ENCODE measurements at regions of chr21 and their contacts with region 1.

Region 1: GRCh38 chr21:25607151-25608043 is at the start of gene MRPL39:
- DNase-seq: peak; percentile 78
- H3K4me3 ChIP-seq: peak within 1 kb of the TSS; percentile 60 to 97 (median 97)
- H3K27ac ChIP-seq: peak within 1 kb of the TSS; percentile 68
- H3K4me1 ChIP-seq: peaks cover 10% of the 10 kb centered on the region
- H3K27me3 ChIP-seq: no peaks in the 10 kb centered on the region
- CTCF ChIP-seq: peak; percentile 55 to 68
- POLR2A ChIP-seq: peak; percentile 73
- total RNA-seq, gene MRPL39: 25.2 and 28.1 TPM in 2 replicates

Region 2: DNA sequence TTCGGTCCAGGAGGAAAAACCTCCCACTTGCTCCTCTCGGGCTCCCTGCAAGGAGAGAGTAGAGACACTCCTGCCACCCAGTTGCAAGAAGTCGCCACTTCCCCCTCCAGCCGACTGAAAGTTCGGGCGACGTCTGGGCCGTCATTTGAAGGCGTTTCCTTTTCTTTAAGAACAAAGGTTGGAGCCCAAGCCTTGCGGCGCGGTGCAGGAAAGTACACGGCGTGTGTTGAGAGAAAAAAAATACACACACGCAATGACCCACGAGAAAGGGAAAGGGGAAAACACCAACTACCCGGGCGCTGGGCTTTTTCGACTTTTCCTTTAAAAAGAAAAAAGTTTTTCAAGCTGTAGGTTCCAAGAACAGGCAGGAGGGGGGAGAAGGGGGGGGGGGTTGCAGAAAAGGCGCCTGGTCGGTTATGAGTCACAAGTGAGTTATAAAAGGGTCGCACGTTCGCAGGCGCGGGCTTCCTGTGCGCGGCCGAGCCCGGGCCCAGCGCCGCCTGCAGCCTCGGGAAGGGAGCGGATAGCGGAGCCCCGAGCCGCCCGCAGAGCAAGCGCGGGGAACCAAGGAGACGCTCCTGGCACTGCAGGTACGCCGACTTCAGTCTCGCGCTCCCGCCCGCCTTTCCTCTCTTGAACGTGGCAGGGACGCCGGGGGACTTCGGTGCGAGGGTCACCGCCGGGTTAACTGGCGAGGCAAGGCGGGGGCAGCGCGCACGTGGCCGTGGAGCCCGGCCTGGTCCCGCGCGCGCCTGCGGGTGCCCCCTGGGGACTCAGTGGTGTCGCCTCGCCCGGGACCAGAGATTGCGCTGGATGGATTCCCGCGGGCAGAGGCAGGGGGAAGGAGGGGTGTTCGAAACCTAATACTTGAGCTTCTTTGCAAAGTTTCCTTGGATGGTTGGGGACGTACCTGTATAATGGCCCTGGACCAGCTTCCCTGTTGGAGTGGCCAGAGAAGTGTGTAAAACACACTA is 45.4 kb before region 1 on chr21:
- CTCF ChIA-PET with region 1: interaction called, 3 read pairs
- POLR2A ChIA-PET with region 1: no interaction called
- dilution Hi-C with region 1: no loop called
- intact Hi-C with region 1: loop called (anchors 2 kb)
- DNase-seq: peak; percentile 82
- H3K4me3 ChIP-seq: peak overlapping the region; percentile 62 to 97 (median 96)
- H3K27ac ChIP-seq: peak overlapping the region; percentile 89
- H3K4me1 ChIP-seq: peaks cover 27% of the 10 kb centered on the region
- H3K27me3 ChIP-seq: no peaks in the 10 kb centered on the region
- CTCF ChIP-seq: peak in 1 of 2 donors; percentile 36
- POLR2A ChIP-seq: peak; percentile 82

Region 3: DNA sequence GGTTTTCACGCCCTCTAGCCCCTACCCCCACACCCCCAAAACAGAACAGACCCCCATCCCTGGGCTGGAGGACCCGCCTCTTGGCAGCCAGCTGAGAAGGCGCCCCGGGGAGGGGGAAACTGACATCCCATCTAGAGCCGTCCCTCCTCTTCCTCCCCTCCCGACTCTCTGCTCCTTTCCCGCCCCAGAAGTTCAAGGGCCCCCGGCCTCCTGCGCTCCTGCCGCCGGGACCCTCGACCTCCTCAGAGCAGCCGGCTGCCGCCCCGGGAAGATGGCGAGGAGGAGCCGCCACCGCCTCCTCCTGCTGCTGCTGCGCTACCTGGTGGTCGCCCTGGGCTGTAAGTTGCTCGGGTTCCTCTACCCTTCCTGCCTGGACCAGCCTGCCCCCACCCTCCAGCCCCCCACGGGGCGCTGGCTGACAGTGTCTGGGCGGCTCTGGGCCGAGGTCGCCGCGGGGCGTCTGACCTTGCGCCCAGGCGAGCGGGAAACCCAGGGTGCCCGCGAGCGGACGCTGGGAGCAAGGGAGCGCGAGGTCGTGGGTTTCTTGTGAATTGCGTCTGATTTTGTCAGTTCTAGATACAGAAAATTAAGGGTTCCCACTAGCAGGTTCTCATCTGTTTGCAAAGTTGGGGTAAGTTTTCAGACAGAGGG is 32.3 kb after region 1 on chr21:
- CTCF ChIA-PET with region 1: no interaction called
- POLR2A ChIA-PET with region 1: no interaction called
- dilution Hi-C with region 1: no loop called
- intact Hi-C with region 1: loop called (anchors 1 kb)
- DNase-seq: peak; percentile 21
- H3K4me3 ChIP-seq: peak overlapping the region; percentile 31 to 59 (median 59)
- H3K27ac ChIP-seq: no peak overlapping the region
- H3K4me1 ChIP-seq: peaks cover 12% of the 10 kb centered on the region
- H3K27me3 ChIP-seq: peaks cover 16 to 38% of the 10 kb centered on the region in 2 experiments
- CTCF ChIP-seq: peak; percentile 33 to 58
- POLR2A ChIP-seq: no peak

Region 4: GRCh38 chr21:25734904-25735645 is 127.7 kb after region 1 on chr21 and contains the starts of genes ATP5PF and GABPA:
- CTCF ChIA-PET with region 1: interaction called, 3 read pairs
- POLR2A ChIA-PET with region 1: no interaction called
- dilution Hi-C with region 1: no loop called
- intact Hi-C with region 1: loop called (anchors 1 kb)
- DNase-seq: peak; percentile 98
- H3K4me3 ChIP-seq: peak within 1 kb of the TSS; percentile 93 to 99 (median 98)
- H3K27ac ChIP-seq: peak within 1 kb of the TSS; percentile 99
- H3K4me1 ChIP-seq: peaks cover 17% of the 10 kb centered on the region
- H3K27me3 ChIP-seq: no peaks in the 10 kb centered on the region
- CTCF ChIP-seq: no peak
- POLR2A ChIP-seq: peak; percentile 85
- total RNA-seq, gene ATP5PF: 132 and 141 TPM in 2 replicates
- total RNA-seq, gene GABPA: 21.0 and 24.1 TPM in 2 replicates

Region 5: GRCh38 chr21:25862596-25862995 is 255.2 kb after region 1 on chr21:
- CTCF ChIA-PET with region 1: interaction called, 5 read pairs
- POLR2A ChIA-PET with region 1: no interaction called
- dilution Hi-C with region 1: no loop called
- intact Hi-C with region 1: loop called (anchors 1 kb)
- DNase-seq: no peak
- H3K4me3 ChIP-seq: no peak overlapping the region
- H3K27ac ChIP-seq: no peak overlapping the region
- H3K4me1 ChIP-seq: no peaks in the 10 kb centered on the region
- H3K27me3 ChIP-seq: peaks cover 1 to 7% of the 10 kb centered on the region in 2 experiments
- CTCF ChIP-seq: peak; percentile 60 to 62
- POLR2A ChIP-seq: no peak

Region 6: GRCh38 chr21:25967573-25968438 is 360.4 kb after region 1 on chr21:
- CTCF ChIA-PET with region 1: no interaction called
- POLR2A ChIA-PET with region 1: no interaction called
- dilution Hi-C with region 1: no loop called
- intact Hi-C with region 1: loop called (anchors 5 kb)
- DNase-seq: peak; percentile 88
- H3K4me3 ChIP-seq: no peak overlapping the region
- H3K27ac ChIP-seq: peak overlapping the region; percentile 67
- H3K4me1 ChIP-seq: peaks cover 45% of the 10 kb centered on the region
- H3K27me3 ChIP-seq: no peaks in the 10 kb centered on the region
- CTCF ChIP-seq: no peak
- POLR2A ChIP-seq: no peak

Measured in endothelial cell of umbilical vein (primary cell).